Activated CD4-positive, alpha-beta memory T cell treated with anti-CD3 and anti-CD28 coated beads for 36 hours (primary cell): ENCODE measurements at regions of chr2 and their contacts with region 1.

Region 1: DNA sequence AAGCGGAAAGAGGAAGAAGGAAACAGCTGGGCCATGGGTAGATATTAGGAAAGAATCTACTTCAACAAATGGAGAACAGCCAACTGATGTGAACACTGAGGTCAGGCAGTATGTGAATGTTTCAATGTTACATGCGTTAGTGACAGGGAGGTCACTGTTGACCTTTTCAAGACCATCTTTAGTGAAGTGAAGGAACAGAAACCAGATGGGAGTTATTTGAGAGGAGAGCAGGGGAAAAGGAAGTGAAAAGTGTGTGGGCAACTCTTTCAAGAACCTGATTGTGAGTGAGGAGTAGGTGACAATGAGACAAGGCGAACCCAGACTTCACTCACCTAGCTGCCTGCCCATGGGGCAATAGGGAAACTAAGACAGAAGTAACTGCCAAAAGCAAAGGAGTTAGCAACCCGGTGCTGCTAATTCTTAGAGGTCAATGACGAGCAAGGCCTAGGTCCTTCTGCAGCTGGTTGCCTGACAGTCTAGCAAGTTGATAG is 67.0 kb downstream of the SP3 start:
- DNase-seq: no peak
- H3K4me3 Mint-ChIP-seq: no peak overlapping the region
- H3K27ac Mint-ChIP-seq: peak overlapping the region; percentile 10
- H3K4me1 Mint-ChIP-seq: peaks cover 23% of the 10 kb centered on the region
- H3K27me3 Mint-ChIP-seq: no peaks in the 10 kb centered on the region

Region 2: GRCh38 chr2:173854840-173855239 is 43.4 kb before region 1 on chr2:
- CTCF ChIA-PET with region 1: no interaction called
- POLR2A ChIA-PET with region 1: no interaction called
- intact Hi-C with region 1: no loop called
- DNase-seq: no peak
- H3K4me3 Mint-ChIP-seq: no peak overlapping the region
- H3K27ac Mint-ChIP-seq: no peak overlapping the region
- H3K4me1 Mint-ChIP-seq: no peaks in the 10 kb centered on the region
- H3K27me3 Mint-ChIP-seq: peaks cover 6% of the 10 kb centered on the region

Region 3: DNA sequence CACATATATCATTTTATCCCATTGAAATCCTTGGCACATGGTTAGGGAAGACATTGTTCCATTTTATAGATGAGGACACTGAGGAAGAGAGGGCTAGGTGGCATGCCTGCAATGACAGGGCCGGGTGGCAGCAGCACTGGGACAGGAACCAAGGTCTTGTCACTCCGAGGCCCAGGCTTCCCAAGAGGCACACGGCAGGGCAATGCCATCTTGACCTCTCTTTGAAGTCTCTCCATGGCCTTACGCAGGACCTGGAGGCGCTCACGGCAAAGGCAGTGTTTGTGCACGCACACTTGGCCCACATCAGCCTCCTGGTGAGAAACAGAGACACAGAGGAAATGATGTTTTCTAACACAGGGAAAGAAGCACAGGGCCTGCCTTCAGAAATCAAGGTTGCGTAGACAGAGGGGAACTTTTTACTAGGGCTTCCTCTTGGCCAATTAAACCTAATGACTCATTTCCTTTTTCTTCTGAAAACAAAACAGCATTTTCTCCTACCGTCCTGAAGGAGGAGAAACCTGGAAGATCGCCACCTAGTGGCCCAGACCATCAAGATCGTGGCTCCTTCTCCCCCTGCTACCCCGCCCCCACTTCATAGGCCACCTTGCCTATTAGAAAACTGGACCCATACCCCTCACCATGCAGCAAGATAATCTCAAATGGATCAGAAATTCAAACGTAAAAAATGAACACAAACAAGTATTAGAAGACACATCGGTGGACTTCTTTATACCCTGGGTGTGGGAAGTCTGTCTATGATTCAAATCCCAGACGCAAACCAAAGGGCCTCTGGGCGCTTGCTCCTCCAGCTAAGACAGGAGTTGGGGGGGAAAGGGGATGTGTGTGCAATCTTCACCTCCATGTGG is 141.6 kb after region 1 on chr2:
- CTCF ChIA-PET with region 1: no interaction called
- POLR2A ChIA-PET with region 1: no interaction called
- intact Hi-C with region 1: loop called (anchors 10 kb)
- DNase-seq: peak; percentile 90
- H3K4me3 Mint-ChIP-seq: peak overlapping the region; percentile 43
- H3K27ac Mint-ChIP-seq: peak overlapping the region; percentile 86
- H3K4me1 Mint-ChIP-seq: peaks cover 17% of the 10 kb centered on the region
- H3K27me3 Mint-ChIP-seq: peaks cover 7% of the 10 kb centered on the region

Region 4: DNA sequence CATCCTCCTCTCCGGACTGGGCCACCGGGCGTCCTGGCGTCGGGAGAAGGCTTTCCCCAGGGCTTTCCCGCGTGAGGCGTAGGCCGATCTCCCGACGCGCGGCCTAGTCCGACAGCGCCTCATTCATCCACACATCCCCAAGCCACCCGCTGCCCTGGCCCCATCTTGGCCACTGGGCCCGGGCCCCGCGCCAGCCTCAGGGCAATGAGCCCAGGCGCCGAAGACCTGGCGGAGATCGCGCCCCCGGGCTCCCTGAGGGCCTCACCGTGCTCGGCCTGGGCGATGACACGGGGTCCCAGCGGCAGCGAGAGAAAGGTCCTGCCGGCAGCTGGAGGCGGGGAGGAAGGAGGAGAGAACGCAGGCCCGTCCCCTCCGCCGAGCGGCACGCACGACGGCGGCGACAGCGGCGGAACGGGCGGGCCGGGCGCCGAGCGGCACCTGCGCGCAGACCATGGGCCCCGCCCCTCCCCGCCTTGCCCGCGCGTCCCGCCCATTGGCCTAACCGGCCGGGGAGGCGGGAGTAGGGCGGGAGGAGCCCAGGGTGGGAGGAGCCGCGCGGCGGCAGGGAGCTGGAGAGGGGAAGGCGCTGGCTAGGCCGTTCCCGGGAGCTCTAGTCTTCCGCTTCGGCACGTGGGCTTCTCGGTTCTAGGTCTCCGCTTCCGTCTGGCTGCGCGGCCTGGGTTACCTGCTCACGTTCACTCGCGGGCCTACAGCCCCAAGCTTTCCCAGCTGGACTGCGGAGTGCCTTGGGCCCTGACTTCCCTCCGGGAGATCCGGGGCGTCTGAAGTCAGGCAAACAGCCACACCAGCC is 350.2 kb after region 1 on chr2 and contains the start of gene OLA1:
- CTCF ChIA-PET with region 1: no interaction called
- POLR2A ChIA-PET with region 1: no interaction called
- intact Hi-C with region 1: loop called (anchors 5 kb)
- DNase-seq: peak; percentile 97
- H3K4me3 Mint-ChIP-seq: peak within 1 kb of the TSS; percentile 86
- H3K27ac Mint-ChIP-seq: peak within 1 kb of the TSS; percentile 77
- H3K4me1 Mint-ChIP-seq: peaks cover 24% of the 10 kb centered on the region
- H3K27me3 Mint-ChIP-seq: no peaks in the 10 kb centered on the region
- total RNA-seq, gene OLA1: 111 to 117 TPM